OCI-LY7 (cell line): ENCODE measurements at regions of chr1 and their contacts with region 1.

Region 1: GRCh38 chr1:181142096-181142958 is 53.8 kb downstream of the IER5 start:
- DNase-seq: peak; percentile 76
- H3K4me3 ChIP-seq: no peak overlapping the region
- H3K27ac ChIP-seq: no peak overlapping the region
- H3K4me1 ChIP-seq: no peaks in the 10 kb centered on the region
- CTCF ChIP-seq: peak; percentile 98

Region 2: DNA sequence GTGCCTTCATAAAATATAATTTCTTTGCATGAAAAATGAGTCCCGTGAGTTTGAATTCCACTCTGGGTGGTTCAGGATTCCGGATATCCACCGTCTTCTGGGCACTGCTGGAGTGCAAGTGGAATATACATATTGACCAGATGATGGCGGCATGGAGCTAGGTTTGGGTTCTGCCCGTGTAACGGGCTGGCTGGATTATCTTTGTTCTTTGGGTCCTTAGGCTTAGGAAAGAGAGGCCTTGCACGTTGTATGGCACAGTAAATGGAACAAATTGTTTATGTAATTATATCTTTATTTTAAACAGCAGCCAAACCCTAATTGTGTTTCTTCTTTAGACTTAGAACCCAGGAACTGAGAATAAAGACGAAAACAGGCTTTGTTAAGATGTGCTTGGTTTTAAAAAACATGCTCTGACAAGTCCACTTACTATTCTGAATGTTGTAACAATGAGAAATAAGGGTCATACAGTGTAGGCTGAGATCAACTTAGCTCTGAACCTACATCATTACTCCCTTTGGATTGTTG is 626.4 kb before region 1 on chr1:
- CTCF ChIA-PET with region 1: no interaction called
- POLR2A ChIA-PET with region 1: no interaction called
- intact Hi-C with region 1: loop called (anchors 5 kb)
- DNase-seq: peak; percentile 74
- H3K4me3 ChIP-seq: no peak overlapping the region
- H3K27ac ChIP-seq: no peak overlapping the region
- H3K4me1 ChIP-seq: no peaks in the 10 kb centered on the region
- CTCF ChIP-seq: peak; percentile 88

Region 3: DNA sequence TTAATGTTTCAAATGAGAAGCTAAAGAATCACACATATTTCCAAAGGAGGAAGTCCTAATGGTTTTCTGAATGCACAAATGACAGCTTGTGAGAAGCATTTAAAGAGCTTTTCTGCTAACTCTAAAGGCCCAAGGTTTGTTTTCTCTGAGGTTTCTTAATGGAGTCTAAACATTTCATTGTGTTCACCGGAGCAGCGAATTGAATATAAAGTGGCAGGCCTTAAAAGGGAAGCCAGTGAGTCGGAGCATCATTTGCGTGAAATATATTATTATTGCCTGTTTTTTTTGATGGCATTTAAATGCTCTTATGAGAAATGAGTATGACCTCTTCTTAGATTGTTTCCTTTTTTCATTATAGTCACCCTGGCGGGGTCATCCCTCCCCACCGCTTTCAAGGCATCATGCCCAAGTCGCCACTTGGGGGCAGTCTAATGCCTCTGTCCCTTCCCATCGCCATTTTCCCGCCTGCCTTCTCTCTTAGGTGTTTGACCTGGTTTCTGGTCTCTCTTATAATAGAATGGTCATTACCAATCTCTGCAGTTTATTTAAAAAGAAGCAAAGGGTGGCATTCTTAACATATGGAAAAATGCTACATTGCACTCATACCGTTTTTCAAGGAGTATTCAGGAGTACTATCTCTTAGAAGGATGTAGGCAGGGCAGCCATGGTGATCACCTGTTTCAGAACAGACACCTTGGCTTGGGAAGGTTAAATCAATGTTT is 608.9 kb before region 1 on chr1:
- CTCF ChIA-PET with region 1: no interaction called
- POLR2A ChIA-PET with region 1: no interaction called
- intact Hi-C with region 1: loop called (anchors 2 kb)
- DNase-seq: peak; percentile 70
- H3K4me3 ChIP-seq: no peak overlapping the region
- H3K27ac ChIP-seq: no peak overlapping the region
- H3K4me1 ChIP-seq: no peaks in the 10 kb centered on the region
- CTCF ChIP-seq: peak; percentile 98

Region 4: GRCh38 chr1:180631766-180632325 is 510.5 kb before region 1 on chr1 and contains the start of gene XPR1:
- CTCF ChIA-PET with region 1: no interaction called
- POLR2A ChIA-PET with region 1: no interaction called
- intact Hi-C with region 1: loop called (anchors 5 kb)
- DNase-seq: peak; percentile 99
- H3K4me3 ChIP-seq: peak within 1 kb of the TSS; percentile 82
- H3K27ac ChIP-seq: peak within 1 kb of the TSS; percentile 76
- H3K4me1 ChIP-seq: peaks cover 25% of the 10 kb centered on the region
- CTCF ChIP-seq: peak; percentile 43; the same call in 1 of the 2 replicates
- total RNA-seq, gene XPR1: 8.6 and 9.0 TPM in 2 replicates

Region 5: DNA sequence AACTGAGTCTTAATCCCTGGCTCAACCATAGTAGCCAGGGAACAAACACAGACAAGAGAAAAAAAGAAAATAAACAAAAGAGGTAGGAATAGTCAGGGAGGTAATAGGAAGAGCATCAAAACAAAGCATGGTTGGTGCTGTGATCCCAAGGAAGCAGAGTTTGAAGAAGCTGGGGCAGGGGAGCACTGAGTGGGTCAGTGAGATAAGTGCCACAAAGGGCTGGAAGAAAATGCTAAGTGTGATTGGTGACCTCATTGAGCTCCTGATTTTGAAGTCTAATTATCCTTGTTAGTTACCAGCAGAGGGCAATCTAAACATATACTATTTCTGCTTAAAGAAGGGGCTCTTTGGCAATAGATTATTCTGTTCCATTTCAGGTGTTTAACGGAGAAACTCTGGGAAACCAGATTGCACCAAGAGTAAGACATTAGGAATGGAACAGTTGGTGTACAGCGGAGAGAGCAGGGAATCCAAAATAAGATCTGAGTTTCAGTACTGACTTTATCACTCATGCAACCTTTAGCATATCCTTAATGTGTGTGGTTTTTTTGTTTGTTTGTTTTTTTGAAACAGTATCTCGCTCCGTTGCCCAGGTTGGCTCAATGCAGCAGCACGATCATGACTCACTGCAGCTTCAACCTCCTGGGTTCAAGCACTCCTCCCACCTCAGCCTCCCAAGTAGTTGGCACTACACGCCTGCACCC is 260.4 kb before region 1 on chr1:
- CTCF ChIA-PET with region 1: interaction called, 6 read pairs
- POLR2A ChIA-PET with region 1: no interaction called
- intact Hi-C with region 1: loop called (anchors 1 kb)
- DNase-seq: peak; percentile 60
- H3K4me3 ChIP-seq: no peak overlapping the region
- H3K27ac ChIP-seq: no peak overlapping the region
- H3K4me1 ChIP-seq: no peaks in the 10 kb centered on the region
- CTCF ChIP-seq: peak; percentile 78

Region 6: GRCh38 chr1:181033799-181034451 is 108.4 kb before region 1 on chr1 and contains the start of gene MR1:
- CTCF ChIA-PET with region 1: interaction called, 3 read pairs
- POLR2A ChIA-PET with region 1: interaction called, 4 read pairs
- intact Hi-C with region 1: loop called (anchors 1 kb)
- DNase-seq: peak; percentile 93
- H3K4me3 ChIP-seq: peak within 1 kb of the TSS; percentile 81
- H3K27ac ChIP-seq: peak within 1 kb of the TSS; percentile 53
- H3K4me1 ChIP-seq: peaks cover 19% of the 10 kb centered on the region
- CTCF ChIP-seq: no peak
- total RNA-seq, gene MR1: 5.9 and 7.9 TPM in 2 replicates

Region 7: GRCh38 chr1:181263054-181263453 is 120.7 kb after region 1 on chr1:
- CTCF ChIA-PET with region 1: no interaction called
- POLR2A ChIA-PET with region 1: no interaction called
- intact Hi-C with region 1: no loop called
- DNase-seq: no peak
- H3K4me3 ChIP-seq: no peak overlapping the region
- H3K27ac ChIP-seq: no peak overlapping the region
- H3K4me1 ChIP-seq: no peaks in the 10 kb centered on the region
- CTCF ChIP-seq: no peak

Region 8: DNA sequence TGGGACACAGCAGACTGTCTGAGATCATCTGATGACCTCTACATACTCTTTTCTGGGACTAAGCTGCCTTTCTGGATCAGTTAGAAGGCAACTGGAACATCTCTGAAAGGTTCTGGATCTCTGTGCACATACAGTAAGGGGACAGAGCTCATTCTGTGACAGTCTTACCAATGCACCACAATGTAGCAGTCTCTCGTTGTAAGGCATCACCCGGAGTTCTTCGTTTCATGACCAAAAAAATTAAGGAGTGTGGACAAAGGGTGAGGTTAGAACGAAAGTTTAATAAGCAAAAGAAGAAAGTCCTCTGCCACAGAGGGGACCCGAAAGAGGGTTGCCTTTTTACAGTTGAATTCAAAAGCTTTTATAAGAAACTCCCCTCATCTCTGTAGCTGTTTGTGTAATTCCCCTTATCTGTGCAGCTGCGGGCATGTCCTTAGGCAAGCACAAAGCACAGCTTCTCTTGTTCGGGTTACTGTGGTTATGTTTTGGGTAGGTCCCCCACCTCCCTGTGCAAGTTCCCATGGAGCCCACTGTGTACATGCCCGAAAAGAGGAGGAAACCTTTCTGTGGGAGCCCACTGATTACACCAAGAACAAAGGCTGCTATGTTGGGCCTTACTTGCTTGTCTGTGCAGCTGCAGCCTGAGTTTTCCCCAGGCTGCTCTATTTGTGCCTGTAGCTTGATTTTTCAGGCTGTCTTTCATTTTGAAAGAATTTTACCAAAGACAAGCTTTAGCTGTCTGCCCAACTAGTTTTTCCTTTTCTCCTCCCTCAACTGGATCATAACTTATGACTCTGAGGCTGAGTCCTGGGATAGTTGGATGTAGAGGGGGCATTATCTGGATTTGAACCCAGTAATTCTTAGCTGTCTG is 287.9 kb after region 1 on chr1:
- CTCF ChIA-PET with region 1: no interaction called
- POLR2A ChIA-PET with region 1: no interaction called
- intact Hi-C with region 1: no loop called
- DNase-seq: no peak
- H3K4me3 ChIP-seq: no peak overlapping the region
- H3K27ac ChIP-seq: no peak overlapping the region
- H3K4me1 ChIP-seq: no peaks in the 10 kb centered on the region
- CTCF ChIP-seq: no peak